ENCODE measurements at regions of chr9 and their contacts with region 1.

Region 1: GRCh38 chr9:33350310-33350709 is 52.1 kb downstream of the AQP7 start:
- DNase-seq: no peak
- ATAC-seq: no peak
- H3K4me3 ChIP-seq: no peak overlapping the region
- H3K27ac ChIP-seq: no peak overlapping the region
- H3K4me1 ChIP-seq: no peaks in the 10 kb centered on the region
- H3K27me3 ChIP-seq: no peaks in the 10 kb centered on the region
- CTCF ChIP-seq: no peak
- POLR2A ChIP-seq: no peak
- RAD21 ChIP-seq: no peak

Region 2: DNA sequence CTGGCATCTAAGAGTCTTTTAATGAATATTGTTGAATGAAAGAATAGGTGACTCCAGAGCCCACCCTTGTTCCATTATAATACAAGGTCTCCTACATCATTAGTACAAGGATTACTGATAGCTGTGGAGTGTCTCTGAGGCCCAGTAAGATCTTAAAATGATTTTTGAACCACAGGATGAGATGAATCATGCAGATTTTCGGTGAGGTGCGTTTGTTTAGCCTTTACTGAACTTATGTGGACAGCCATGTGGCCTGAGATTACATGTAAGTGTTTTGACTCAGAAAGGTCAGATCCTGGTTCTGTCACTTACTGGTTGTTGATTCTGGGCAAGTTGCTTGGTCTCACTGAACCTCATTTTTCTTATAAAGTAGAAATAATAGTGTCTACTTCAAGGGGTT is 38.4 kb before region 1 on chr9:
- CTCF ChIA-PET with region 1: no interaction called
- POLR2A ChIA-PET with region 1: no interaction called
- RAD21 ChIA-PET with region 1: no interaction called
- intact Hi-C with region 1: loop called (anchors 5 kb)
- DNase-seq: no peak
- ATAC-seq: no peak
- H3K4me3 ChIP-seq: no peak overlapping the region
- H3K27ac ChIP-seq: no peak overlapping the region
- H3K4me1 ChIP-seq: no peaks in the 10 kb centered on the region
- H3K27me3 ChIP-seq: no peaks in the 10 kb centered on the region
- CTCF ChIP-seq: no peak
- POLR2A ChIP-seq: no peak
- RAD21 ChIP-seq: no peak